IMR-90 (cell line): ENCODE measurements at regions of chr12 and their contacts with region 1.

Region 1: GRCh38 chr12:108826101-108826806 is 31.1 kb downstream of the SSH1 start:
- DNase-seq: peak; percentile 97
- ATAC-seq: peak; percentile 75
- H3K4me3 ChIP-seq: peak overlapping the region; percentile 26; the same call in 1 of the 2 replicates
- H3K27ac ChIP-seq: peak overlapping the region; percentile 99
- H3K4me1 ChIP-seq: peaks cover 34% of the 10 kb centered on the region
- H3K27me3 ChIP-seq: no peaks in the 10 kb centered on the region
- CTCF ChIP-seq: peak; percentile 27; the same call in 1 of the 2 replicates
- POLR2A ChIP-seq: peak; percentile 79
- RAD21 ChIP-seq: peak; percentile 30; the same call in 1 of the 2 replicates

Region 2: GRCh38 chr12:108838194-108839017 is 12.2 kb after region 1 on chr12:
- CTCF ChIA-PET with region 1: interaction called, 4 read pairs
- POLR2A ChIA-PET with region 1: interaction called, 11 read pairs
- dilution Hi-C with region 1: no loop called
- in situ Hi-C with region 1: no loop called
- intact Hi-C with region 1: no loop called
- DNase-seq: peak; percentile 100
- ATAC-seq: peak; percentile 78
- H3K4me3 ChIP-seq: no peak overlapping the region
- H3K27ac ChIP-seq: peak overlapping the region; percentile 99
- H3K4me1 ChIP-seq: peaks cover 48% of the 10 kb centered on the region
- H3K27me3 ChIP-seq: no peaks in the 10 kb centered on the region
- CTCF ChIP-seq: no peak
- POLR2A ChIP-seq: peak; percentile 94; the same call in 1 of the 2 replicates
- RAD21 ChIP-seq: peak; percentile 20

Region 3: GRCh38 chr12:108858311-108859074 is 32.2 kb after region 1 on chr12:
- CTCF ChIA-PET with region 1: no interaction called
- POLR2A ChIA-PET with region 1: no interaction called
- dilution Hi-C with region 1: no loop called
- in situ Hi-C with region 1: no loop called
- intact Hi-C with region 1: no loop called
- DNase-seq: no peak
- ATAC-seq: no peak
- H3K4me3 ChIP-seq: no peak overlapping the region
- H3K27ac ChIP-seq: peak overlapping the region; percentile 60
- H3K4me1 ChIP-seq: peaks cover 19% of the 10 kb centered on the region
- H3K27me3 ChIP-seq: no peaks in the 10 kb centered on the region
- CTCF ChIP-seq: no peak
- POLR2A ChIP-seq: no peak
- RAD21 ChIP-seq: no peak

Region 4: DNA sequence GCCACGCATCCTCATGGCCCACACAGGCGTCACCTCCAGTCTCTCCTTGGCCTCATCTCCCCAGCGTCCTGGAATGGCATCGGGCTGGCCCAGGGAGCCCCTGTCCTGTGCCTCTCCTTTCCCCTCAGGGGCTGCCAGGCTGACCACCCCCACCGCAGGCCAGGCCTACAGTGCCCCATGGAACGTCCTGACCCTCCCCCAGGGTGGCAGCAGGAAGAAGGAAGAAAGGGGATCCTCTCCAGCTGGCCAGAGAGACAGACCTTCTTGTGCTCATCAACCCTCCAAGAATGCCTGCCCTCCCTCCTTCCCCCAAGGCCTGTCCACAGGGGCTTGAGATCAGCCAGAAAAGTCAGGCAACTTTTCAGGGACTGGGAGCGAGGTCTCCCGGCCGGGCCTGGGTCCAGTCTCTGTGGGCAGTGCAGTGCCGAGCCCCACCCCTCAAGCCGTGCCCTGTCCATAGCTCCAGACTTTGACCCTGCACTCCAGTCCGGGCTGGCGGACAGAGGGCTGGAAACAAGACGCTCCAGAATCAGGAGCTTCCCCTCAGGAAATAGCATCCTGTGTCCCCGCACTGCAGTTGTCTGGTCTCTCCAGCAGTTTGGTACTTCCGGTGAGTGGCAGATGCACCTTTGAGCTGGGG is 53.5 kb after region 1 on chr12 and contains the start of gene DAO:
- CTCF ChIA-PET with region 1: no interaction called
- POLR2A ChIA-PET with region 1: no interaction called
- dilution Hi-C with region 1: no loop called
- in situ Hi-C with region 1: no loop called
- intact Hi-C with region 1: no loop called
- DNase-seq: no peak
- ATAC-seq: no peak
- H3K4me3 ChIP-seq: no peak within 1 kb of the TSS
- H3K27ac ChIP-seq: no peak within 1 kb of the TSS
- H3K4me1 ChIP-seq: no peaks in the 10 kb centered on the region
- H3K27me3 ChIP-seq: peaks cover 10% of the 10 kb centered on the region
- CTCF ChIP-seq: no peak
- POLR2A ChIP-seq: no peak
- RAD21 ChIP-seq: no peak
- total RNA-seq, gene DAO: not detected in 2 replicates

Region 5: GRCh38 chr12:108907476-108908351 is 81.5 kb after region 1 on chr12:
- CTCF ChIA-PET with region 1: no interaction called
- POLR2A ChIA-PET with region 1: no interaction called
- dilution Hi-C with region 1: no loop called
- in situ Hi-C with region 1: no loop called
- intact Hi-C with region 1: no loop called
- DNase-seq: no peak
- ATAC-seq: peak; percentile 17; the same call in 1 of the 2 replicates
- H3K4me3 ChIP-seq: no peak overlapping the region
- H3K27ac ChIP-seq: no peak overlapping the region
- H3K4me1 ChIP-seq: no peaks in the 10 kb centered on the region
- H3K27me3 ChIP-seq: peaks cover 4% of the 10 kb centered on the region
- CTCF ChIP-seq: no peak
- POLR2A ChIP-seq: no peak
- RAD21 ChIP-seq: no peak

Region 6: GRCh38 chr12:108939594-108939993 is 113.3 kb after region 1 on chr12:
- CTCF ChIA-PET with region 1: no interaction called
- POLR2A ChIA-PET with region 1: no interaction called
- dilution Hi-C with region 1: no loop called
- in situ Hi-C with region 1: no loop called
- intact Hi-C with region 1: no loop called
- DNase-seq: peak; percentile 13
- ATAC-seq: no peak
- H3K4me3 ChIP-seq: no peak overlapping the region
- H3K27ac ChIP-seq: no peak overlapping the region
- H3K4me1 ChIP-seq: no peaks in the 10 kb centered on the region
- H3K27me3 ChIP-seq: peaks cover 32% of the 10 kb centered on the region
- CTCF ChIP-seq: no peak
- POLR2A ChIP-seq: no peak
- RAD21 ChIP-seq: no peak